ENCODE measurements at regions of chr3 and their contacts with region 1.

Region 1: GRCh38 chr3:51682079-51682478 is 11.0 kb downstream of the TEX264 start:
- DNase-seq: peak; percentile 89
- H3K4me3 Mint-ChIP-seq: peak overlapping the region; percentile 70
- H3K27ac Mint-ChIP-seq: peak overlapping the region; percentile 77
- H3K4me1 Mint-ChIP-seq: peaks cover 94% of the 10 kb centered on the region
- H3K27me3 Mint-ChIP-seq: no peaks in the 10 kb centered on the region

Region 2: GRCh38 chr3:51498876-51499738 is 183.0 kb before region 1 on chr3:
- CTCF ChIA-PET with region 1: interaction called, 116 read pairs
- POLR2A ChIA-PET with region 1: interaction called, 15 read pairs
- DNase-seq: peak; percentile 89
- H3K4me3 Mint-ChIP-seq: peak overlapping the region; percentile 100
- H3K27ac Mint-ChIP-seq: peak overlapping the region; percentile 97
- H3K4me1 Mint-ChIP-seq: peaks cover 28% of the 10 kb centered on the region
- H3K27me3 Mint-ChIP-seq: no peaks in the 10 kb centered on the region

Region 3: DNA sequence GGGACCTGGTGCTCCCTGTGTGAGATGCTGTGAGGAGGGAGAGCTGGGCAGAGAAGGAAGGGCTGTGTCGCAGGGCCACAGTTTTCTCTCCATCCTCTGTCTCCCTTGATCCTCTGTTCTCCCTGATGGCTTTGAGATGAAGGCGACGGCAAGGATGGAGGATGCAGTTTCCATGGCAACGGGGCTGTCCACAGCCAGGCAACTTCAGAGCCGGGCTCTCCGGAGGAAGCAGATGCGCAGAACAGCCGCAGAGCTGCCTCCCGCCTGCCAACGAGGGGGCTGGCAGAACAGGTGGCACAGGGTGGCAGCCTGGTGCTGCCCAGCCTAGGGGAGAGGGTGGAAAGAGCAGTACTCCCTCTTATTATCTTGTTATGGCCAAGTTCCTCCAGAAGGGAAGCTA is 14.9 kb after region 1 on chr3:
- CTCF ChIA-PET with region 1: interaction called, 17 read pairs
- POLR2A ChIA-PET with region 1: no interaction called
- DNase-seq: no peak
- H3K4me3 Mint-ChIP-seq: no peak overlapping the region
- H3K27ac Mint-ChIP-seq: no peak overlapping the region
- H3K4me1 Mint-ChIP-seq: peaks cover 13% of the 10 kb centered on the region
- H3K27me3 Mint-ChIP-seq: no peaks in the 10 kb centered on the region

Measured in activated CD4-positive, alpha-beta T cell treated with anti-CD3 and anti-CD28 coated beads, Interleukin-2, amount 10 ng/mL, durations not matched to agents 7 days and 5 days (primary cell).